CD8-positive, alpha-beta T cell (primary cell): ENCODE measurements at regions of chr20 and their contacts with region 1.

Region 1: DNA sequence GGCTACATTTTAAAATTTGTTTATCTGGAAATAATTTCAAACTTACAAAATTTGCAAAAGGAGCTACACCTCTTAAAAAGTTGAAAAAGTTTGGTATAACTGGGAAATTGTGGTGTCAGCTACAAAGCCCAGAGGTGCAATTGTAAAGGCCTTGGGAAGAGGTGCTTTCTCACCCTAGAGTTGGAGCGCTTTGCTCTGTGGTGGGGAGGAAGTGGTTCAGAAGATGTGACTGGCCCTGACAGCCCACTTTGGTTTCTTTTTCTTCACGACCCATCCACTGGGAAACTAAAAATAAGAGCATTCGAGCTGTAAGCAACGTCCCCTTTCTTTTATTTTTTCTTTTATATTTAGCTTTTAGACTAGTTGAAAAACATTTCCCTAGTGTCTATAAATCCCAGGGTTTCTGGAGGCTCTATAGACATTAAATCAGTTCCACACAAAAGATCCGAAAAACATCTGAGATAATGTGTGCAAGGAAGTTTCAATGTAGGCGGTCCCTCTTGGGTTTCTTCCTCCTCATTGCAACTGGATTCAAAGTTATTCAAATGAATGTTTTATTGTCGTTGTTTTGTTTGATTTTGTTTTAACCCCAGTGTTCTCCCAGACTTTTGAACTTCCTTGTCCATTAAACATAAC is 397.8 kb downstream of the KIF16B start:
- DNase-seq: peak in 3 of 9 experiments; percentile 10 to 22 (median 17)
- ATAC-seq: no peak
- H3K4me3 ChIP-seq: no peak overlapping the region
- H3K4me3 Mint-ChIP-seq: no peak overlapping the region
- H3K27ac ChIP-seq: no peak overlapping the region
- H3K27ac Mint-ChIP-seq: no peak overlapping the region
- H3K4me1 ChIP-seq: no peaks in the 10 kb centered on the region
- H3K4me1 Mint-ChIP-seq: no peaks in the 10 kb centered on the region
- H3K27me3 ChIP-seq: no peaks in the 10 kb centered on the region
- H3K27me3 Mint-ChIP-seq: no peaks in the 10 kb centered on the region
- CTCF ChIP-seq: no peak

Region 2: GRCh38 chr20:16158090-16158975 is 17.1 kb before region 1 on chr20:
- CTCF ChIA-PET with region 1: no interaction called
- POLR2A ChIA-PET with region 1: no interaction called
- intact Hi-C with region 1: loop called in 1 of 2 experiments (anchors 1 kb)
- DNase-seq: no peak
- ATAC-seq: no peak
- H3K4me3 ChIP-seq: no peak overlapping the region
- H3K4me3 Mint-ChIP-seq: no peak overlapping the region
- H3K27ac ChIP-seq: no peak overlapping the region
- H3K27ac Mint-ChIP-seq: no peak overlapping the region
- H3K4me1 ChIP-seq: no peaks in the 10 kb centered on the region
- H3K4me1 Mint-ChIP-seq: no peaks in the 10 kb centered on the region
- H3K27me3 ChIP-seq: no peaks in the 10 kb centered on the region
- H3K27me3 Mint-ChIP-seq: no peaks in the 10 kb centered on the region
- CTCF ChIP-seq: no peak